ENCODE measurements at regions of chr11 and their contacts with region 1.

Region 1: GRCh38 chr11:66480117-66480938 is at the start of gene DPP3:
- DNase-seq: peak; percentile 93 to 98 (median 97)
- H3K4me3 ChIP-seq: peak within 1 kb of the TSS; percentile 55 to 98 (median 82)
- H3K27ac ChIP-seq: peak within 1 kb of the TSS in 57 of 59 donors; percentile 4 to 95 (median 83)
- H3K27me3 ChIP-seq: no peaks in the 10 kb centered on the region
- CTCF ChIP-seq: peak in 32 of 56 donors; percentile 7 to 67 (median 28)
- total RNA-seq, gene DPP3: 12.1 to 40.9 (median 22.3) TPM

Region 2: GRCh38 chr11:66438504-66439466 is 41.5 kb before region 1 on chr11 and contains the start of gene MRPL11:
- intact Hi-C with region 1: loop called in 1 of 2 experiments (anchors 2 kb)
- DNase-seq: peak; percentile 83 to 94 (median 90)
- H3K4me3 ChIP-seq: peak within 1 kb of the TSS; percentile 67 to 99 (median 89)
- H3K27ac ChIP-seq: peak within 1 kb of the TSS; percentile 5 to 98 (median 91)
- H3K27me3 ChIP-seq: no peaks in the 10 kb centered on the region
- CTCF ChIP-seq: peak; percentile 68 to 95 (median 86)
- total RNA-seq, gene MRPL11: 10.0 to 26.4 (median 18.3) TPM

Region 3: GRCh38 chr11:66510271-66510989 is 30.1 kb after region 1 on chr11 and contains the start of gene BBS1:
- intact Hi-C with region 1: loop called in 1 of 2 experiments (anchors 2 kb)
- DNase-seq: peak; percentile 76 to 93 (median 84)
- H3K4me3 ChIP-seq: peak within 1 kb of the TSS; percentile 59 to 97 (median 85)
- H3K27ac ChIP-seq: peak within 1 kb of the TSS in 56 of 59 donors; percentile 1 to 88 (median 72)
- H3K27me3 ChIP-seq: no peaks in the 10 kb centered on the region
- CTCF ChIP-seq: peak in 29 of 56 donors; percentile 5 to 64 (median 33)
- total RNA-seq, gene BBS1: 53.4 to 137 (median 93.2) TPM

Region 4: GRCh38 chr11:66523462-66524010 is 43.2 kb after region 1 on chr11:
- intact Hi-C with region 1: no loop called
- DNase-seq: no peak
- H3K4me3 ChIP-seq: no peak overlapping the region
- H3K27ac ChIP-seq: no peak overlapping the region
- H3K27me3 ChIP-seq: no peaks in the 10 kb centered on the region
- CTCF ChIP-seq: no peak

Region 5: GRCh38 chr11:66545701-66546367 is 65.5 kb after region 1 on chr11 and contains the start of gene ZDHHC24:
- intact Hi-C with region 1: loop called in 1 of 2 experiments (anchors 5 kb)
- DNase-seq: peak; percentile 94 to 99 (median 97)
- H3K4me3 ChIP-seq: peak within 1 kb of the TSS; percentile 59 to 99 (median 88)
- H3K27ac ChIP-seq: peak within 1 kb of the TSS in 44 of 59 donors; percentile 2 to 87 (median 55)
- H3K27me3 ChIP-seq: no peaks in the 10 kb centered on the region
- CTCF ChIP-seq: peak in 36 of 56 donors; percentile 5 to 62 (median 32)
- total RNA-seq, gene ZDHHC24: 9.6 to 20.9 (median 14.9) TPM